MCF 10A (cell line): ENCODE measurements at regions of chrX and their contacts with region 1.

Region 1: GRCh38 chrX:27680726-27681125 is 90.6 kb downstream of the DCAF8L2 start:
- DNase-seq: no peak
- H3K4me3 Mint-ChIP-seq: no peak overlapping the region
- H3K27ac Mint-ChIP-seq: no peak overlapping the region
- H3K4me1 Mint-ChIP-seq: peaks cover 4% of the 10 kb centered on the region
- H3K27me3 Mint-ChIP-seq: no peaks in the 10 kb centered on the region
- CTCF ChIP-seq: no peak

Region 2: GRCh38 chrX:27451324-27451723 is 229.4 kb before region 1 on chrX:
- CTCF ChIA-PET with region 1: no interaction called
- POLR2A ChIA-PET with region 1: no interaction called
- intact Hi-C with region 1: no loop called
- DNase-seq: no peak
- H3K4me3 Mint-ChIP-seq: no peak overlapping the region
- H3K27ac Mint-ChIP-seq: no peak overlapping the region
- H3K4me1 Mint-ChIP-seq: no peaks in the 10 kb centered on the region
- H3K27me3 Mint-ChIP-seq: no peaks in the 10 kb centered on the region
- CTCF ChIP-seq: no peak

Region 3: DNA sequence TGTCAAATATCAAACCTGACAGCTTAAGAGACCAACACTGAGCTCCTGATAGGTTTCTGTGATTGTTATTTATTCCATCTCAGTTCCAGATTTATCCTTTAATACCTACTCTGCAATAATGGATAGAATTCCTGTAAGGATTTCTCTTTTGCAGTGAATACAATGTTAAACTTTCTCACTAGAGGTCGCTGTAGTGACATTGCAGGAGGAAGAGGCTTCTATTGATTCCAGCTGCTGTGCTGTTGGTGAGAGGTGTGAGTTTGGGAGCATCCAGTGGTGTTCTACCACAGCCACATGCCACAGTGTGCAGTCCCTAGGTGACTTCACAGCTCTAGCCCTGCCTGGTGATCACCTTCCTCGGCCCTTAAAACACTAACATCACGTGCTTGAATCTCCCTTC is 125.2 kb before region 1 on chrX:
- CTCF ChIA-PET with region 1: interaction called, 13 read pairs
- POLR2A ChIA-PET with region 1: no interaction called
- intact Hi-C with region 1: loop called (anchors 5 kb)
- DNase-seq: peak; percentile 47
- H3K4me3 Mint-ChIP-seq: no peak overlapping the region
- H3K27ac Mint-ChIP-seq: no peak overlapping the region
- H3K4me1 Mint-ChIP-seq: no peaks in the 10 kb centered on the region
- H3K27me3 Mint-ChIP-seq: no peaks in the 10 kb centered on the region
- CTCF ChIP-seq: peak; percentile 35

Region 4: GRCh38 chrX:27599928-27600327 is 80.8 kb before region 1 on chrX:
- CTCF ChIA-PET with region 1: interaction called, 4 read pairs
- POLR2A ChIA-PET with region 1: no interaction called
- intact Hi-C with region 1: loop called (anchors 1 kb)
- DNase-seq: peak; percentile 58
- H3K4me3 Mint-ChIP-seq: no peak overlapping the region
- H3K27ac Mint-ChIP-seq: no peak overlapping the region
- H3K4me1 Mint-ChIP-seq: no peaks in the 10 kb centered on the region
- H3K27me3 Mint-ChIP-seq: no peaks in the 10 kb centered on the region
- CTCF ChIP-seq: peak; percentile 24

Region 5: DNA sequence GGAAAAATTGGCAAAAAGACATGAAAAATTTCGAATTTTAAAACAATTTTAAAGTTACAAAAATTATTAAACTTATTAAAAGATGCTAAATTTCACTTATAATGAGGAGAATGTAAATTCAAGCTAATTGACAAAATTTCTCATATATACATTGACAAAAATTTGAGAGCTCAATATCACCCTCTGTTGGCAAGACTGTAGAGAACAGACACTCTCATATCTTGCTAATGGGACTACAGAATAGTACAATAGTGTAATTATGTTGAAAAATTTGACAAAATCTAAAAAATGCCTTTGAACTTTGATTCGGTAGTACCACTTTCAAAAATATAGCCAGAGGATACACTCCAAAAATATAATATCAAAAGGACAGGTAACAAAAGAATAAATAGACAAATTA is 60.8 kb before region 1 on chrX:
- CTCF ChIA-PET with region 1: interaction called, 4 read pairs
- POLR2A ChIA-PET with region 1: interaction called, 4 read pairs
- intact Hi-C with region 1: loop called (anchors 5 kb)
- DNase-seq: peak; percentile 47
- H3K4me3 Mint-ChIP-seq: no peak overlapping the region
- H3K27ac Mint-ChIP-seq: no peak overlapping the region
- H3K4me1 Mint-ChIP-seq: no peaks in the 10 kb centered on the region
- H3K27me3 Mint-ChIP-seq: no peaks in the 10 kb centered on the region
- CTCF ChIP-seq: peak; percentile 42